ENCODE measurements at regions of chr11 and their contacts with region 1.

Region 1: DNA sequence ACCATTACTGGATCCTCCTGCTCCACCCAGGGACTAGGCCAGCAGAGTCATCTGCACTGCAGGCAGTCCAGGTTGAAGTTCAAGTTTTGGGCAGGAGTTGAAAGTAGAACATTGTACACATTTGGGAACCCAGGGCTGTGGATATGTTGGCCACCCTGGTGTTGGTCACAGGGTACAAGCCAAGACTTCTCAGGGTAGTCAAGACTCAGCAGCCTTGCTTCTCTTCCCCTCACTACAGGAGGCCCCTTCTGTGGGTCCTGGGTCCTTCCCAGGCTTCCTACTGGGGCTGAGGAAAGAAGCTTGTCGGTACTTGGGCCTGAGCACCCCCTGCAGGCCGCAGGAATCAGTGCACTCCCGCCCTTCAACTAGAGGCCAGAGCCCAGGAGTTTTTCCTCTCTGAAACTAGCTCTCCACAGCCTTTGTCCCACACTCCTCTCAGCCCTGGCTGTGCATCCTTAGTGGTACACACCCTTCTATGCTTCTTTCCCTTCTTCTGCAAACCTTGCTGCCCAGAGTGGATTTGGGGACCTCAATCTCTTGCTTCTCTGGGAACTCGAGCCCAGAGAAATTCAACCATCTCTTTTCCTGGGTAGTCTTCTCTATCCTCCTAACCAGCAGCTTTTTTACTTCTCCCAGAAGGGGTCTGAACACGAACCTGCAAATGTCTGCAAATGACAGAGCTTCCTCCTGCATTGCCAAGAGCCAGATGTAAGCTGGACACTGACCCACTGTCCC is 2.6 kb upstream of the HPX start:
- DNase-seq: peak; percentile 53 to 58 (median 57)
- H3K4me3 ChIP-seq: no peak overlapping the region
- H3K4me3 Mint-ChIP-seq: no peak overlapping the region
- H3K27ac ChIP-seq: no peak overlapping the region
- H3K27ac Mint-ChIP-seq: no peak overlapping the region
- H3K4me1 ChIP-seq: peaks cover 18% of the 10 kb centered on the region
- H3K4me1 Mint-ChIP-seq: no peaks in the 10 kb centered on the region
- H3K27me3 ChIP-seq: no peaks in the 10 kb centered on the region
- H3K27me3 Mint-ChIP-seq: no peaks in the 10 kb centered on the region

Region 2: DNA sequence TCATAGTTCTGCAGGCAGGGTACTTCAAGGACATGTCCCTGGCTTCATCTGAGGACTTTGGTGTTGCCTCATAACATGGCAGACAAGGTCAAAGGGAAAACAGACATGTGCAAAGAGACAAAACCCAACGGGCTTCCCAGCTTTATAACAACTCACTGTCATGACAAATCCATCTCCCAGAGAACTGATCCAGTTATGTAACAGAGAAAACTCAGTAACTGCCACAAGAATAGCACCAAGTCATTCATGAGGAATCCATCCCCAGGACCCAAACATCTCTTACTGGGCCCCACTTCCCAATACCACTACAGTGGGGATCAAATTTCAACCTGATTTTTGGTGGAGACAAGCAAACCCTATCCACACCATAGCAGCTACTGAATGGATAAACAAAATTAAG is 676.4 kb before region 1 on chr11:
- CTCF ChIA-PET with region 1: no interaction called
- POLR2A ChIA-PET with region 1: no interaction called
- intact Hi-C with region 1: no loop called
- DNase-seq: no peak
- H3K4me3 ChIP-seq: no peak overlapping the region
- H3K4me3 Mint-ChIP-seq: no peak overlapping the region
- H3K27ac ChIP-seq: no peak overlapping the region
- H3K27ac Mint-ChIP-seq: peak overlapping the region in 1 of 7 donors; percentile 9
- H3K4me1 ChIP-seq: no peaks in the 10 kb centered on the region
- H3K4me1 Mint-ChIP-seq: no peaks in the 10 kb centered on the region
- H3K27me3 ChIP-seq: no peaks in the 10 kb centered on the region
- H3K27me3 Mint-ChIP-seq: peaks cover 1 to 3% of the 10 kb centered on the region in 2 donors

Region 3: GRCh38 chr11:6229911-6230310 is 213.5 kb before region 1 on chr11:
- CTCF ChIA-PET with region 1: no interaction called
- POLR2A ChIA-PET with region 1: no interaction called
- intact Hi-C with region 1: no loop called
- DNase-seq: peak in 2 of 5 donors; percentile 5 to 19
- H3K4me3 ChIP-seq: no peak overlapping the region
- H3K4me3 Mint-ChIP-seq: peak overlapping the region in 3 of 8 donors; percentile 12 to 51 (median 23)
- H3K27ac ChIP-seq: no peak overlapping the region
- H3K27ac Mint-ChIP-seq: peak overlapping the region in 6 of 7 donors; percentile 13 to 84 (median 34)
- H3K4me1 ChIP-seq: peaks cover 32% of the 10 kb centered on the region
- H3K4me1 Mint-ChIP-seq: peaks cover 46 to 83% (median 67%) of the 10 kb centered on the region in 4 donors
- H3K27me3 ChIP-seq: no peaks in the 10 kb centered on the region
- H3K27me3 Mint-ChIP-seq: no peaks in the 10 kb centered on the region

Region 4: GRCh38 chr11:6333112-6333511 is 110.3 kb before region 1 on chr11:
- CTCF ChIA-PET with region 1: no interaction called
- POLR2A ChIA-PET with region 1: no interaction called
- intact Hi-C with region 1: no loop called
- DNase-seq: no peak
- H3K4me3 ChIP-seq: no peak overlapping the region
- H3K4me3 Mint-ChIP-seq: no peak overlapping the region
- H3K27ac ChIP-seq: no peak overlapping the region
- H3K27ac Mint-ChIP-seq: no peak overlapping the region
- H3K4me1 ChIP-seq: no peaks in the 10 kb centered on the region
- H3K4me1 Mint-ChIP-seq: no peaks in the 10 kb centered on the region
- H3K27me3 ChIP-seq: no peaks in the 10 kb centered on the region
- H3K27me3 Mint-ChIP-seq: peaks cover 7 to 8% of the 10 kb centered on the region in 2 donors

Region 5: GRCh38 chr11:6362873-6363678 is 80.4 kb before region 1 on chr11:
- CTCF ChIA-PET with region 1: interaction called, 33 read pairs
- POLR2A ChIA-PET with region 1: interaction called, 3 read pairs
- intact Hi-C with region 1: no loop called
- DNase-seq: peak; percentile 42 to 59 (median 52)
- H3K4me3 ChIP-seq: no peak overlapping the region
- H3K4me3 Mint-ChIP-seq: no peak overlapping the region
- H3K27ac ChIP-seq: no peak overlapping the region
- H3K27ac Mint-ChIP-seq: no peak overlapping the region
- H3K4me1 ChIP-seq: no peaks in the 10 kb centered on the region
- H3K4me1 Mint-ChIP-seq: no peaks in the 10 kb centered on the region
- H3K27me3 ChIP-seq: no peaks in the 10 kb centered on the region
- H3K27me3 Mint-ChIP-seq: no peaks in the 10 kb centered on the region

Region 6: DNA sequence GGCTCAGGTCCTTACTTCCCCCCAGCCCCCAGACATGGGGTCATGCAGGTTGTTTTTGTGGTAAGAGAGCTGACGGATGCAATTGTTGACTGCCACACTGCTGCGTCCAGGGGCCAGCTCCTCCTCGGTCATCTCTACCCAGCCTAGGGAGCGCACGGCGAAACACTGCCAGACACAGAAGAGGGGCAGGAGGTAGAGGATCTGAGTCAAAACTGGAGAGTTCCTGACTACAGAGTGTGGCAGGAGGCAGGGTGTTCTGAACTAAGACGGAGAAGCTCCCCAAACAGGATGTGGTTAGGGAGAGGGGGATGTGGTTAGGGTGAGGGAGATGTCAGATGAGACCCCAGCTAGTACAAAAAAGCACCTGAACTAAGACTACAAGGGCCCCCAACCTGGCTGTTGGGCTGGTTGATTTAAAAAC is 40.9 kb before region 1 on chr11:
- CTCF ChIA-PET with region 1: interaction called, 42 read pairs
- POLR2A ChIA-PET with region 1: interaction called, 8 read pairs
- intact Hi-C with region 1: loop called (anchors 1 kb)
- DNase-seq: peak; percentile 89 to 95 (median 90)
- H3K4me3 ChIP-seq: peak overlapping the region; percentile 40 to 53
- H3K4me3 Mint-ChIP-seq: peak overlapping the region; percentile 80 to 98 (median 84)
- H3K27ac ChIP-seq: peak overlapping the region; percentile 69
- H3K27ac Mint-ChIP-seq: peak overlapping the region; percentile 96 to 99 (median 97)
- H3K4me1 ChIP-seq: peaks cover 72% of the 10 kb centered on the region
- H3K4me1 Mint-ChIP-seq: peaks cover 62 to 98% (median 80%) of the 10 kb centered on the region in 4 donors
- H3K27me3 ChIP-seq: no peaks in the 10 kb centered on the region
- H3K27me3 Mint-ChIP-seq: no peaks in the 10 kb centered on the region

Region 7: DNA sequence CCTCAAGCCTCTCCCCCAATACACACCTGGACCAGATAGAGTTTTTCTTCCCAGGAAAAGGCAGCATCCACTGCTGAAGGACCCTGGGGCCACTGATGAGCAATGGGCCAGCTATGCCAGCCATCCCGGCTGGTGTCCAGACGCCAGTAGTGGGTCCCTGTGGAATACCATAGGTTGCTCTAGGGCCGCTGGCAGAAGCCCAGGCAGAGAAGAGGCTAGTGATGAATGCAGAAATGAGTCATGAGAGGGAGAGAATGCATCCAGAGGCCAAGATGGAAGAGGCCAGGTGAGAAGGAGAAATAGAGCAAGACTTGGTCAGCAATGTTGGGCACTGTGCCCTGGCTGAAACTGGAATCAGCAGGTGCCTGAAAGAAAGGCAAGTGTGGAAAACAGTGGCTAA is 11.6 kb before region 1 on chr11:
- CTCF ChIA-PET with region 1: interaction called, 31 read pairs
- POLR2A ChIA-PET with region 1: no interaction called
- intact Hi-C with region 1: no loop called
- DNase-seq: no peak
- H3K4me3 ChIP-seq: no peak overlapping the region
- H3K4me3 Mint-ChIP-seq: no peak overlapping the region
- H3K27ac ChIP-seq: no peak overlapping the region
- H3K27ac Mint-ChIP-seq: no peak overlapping the region
- H3K4me1 ChIP-seq: peaks cover under 1% of the 10 kb centered on the region
- H3K4me1 Mint-ChIP-seq: no peaks in the 10 kb centered on the region
- H3K27me3 ChIP-seq: no peaks in the 10 kb centered on the region
- H3K27me3 Mint-ChIP-seq: no peaks in the 10 kb centered on the region

Region 8: GRCh38 chr11:6481012-6481923 is 37.8 kb after region 1 on chr11 and contains the starts of genes ARFIP2 and TIMM10B:
- CTCF ChIA-PET with region 1: interaction called, 9 read pairs
- POLR2A ChIA-PET with region 1: interaction called, 4 read pairs
- intact Hi-C with region 1: loop called (anchors 5 kb)
- DNase-seq: peak; percentile 93 to 98 (median 95)
- H3K4me3 ChIP-seq: peak within 1 kb of the TSS; percentile 83 to 97
- H3K4me3 Mint-ChIP-seq: peak within 1 kb of the TSS; percentile 93 to 98 (median 96)
- H3K27ac ChIP-seq: peak within 1 kb of the TSS; percentile 90
- H3K27ac Mint-ChIP-seq: peak within 1 kb of the TSS; percentile 95 to 99 (median 98)
- H3K4me1 ChIP-seq: peaks cover 46% of the 10 kb centered on the region
- H3K4me1 Mint-ChIP-seq: peaks cover 26 to 44% (median 36%) of the 10 kb centered on the region in 4 donors
- H3K27me3 ChIP-seq: no peaks in the 10 kb centered on the region
- H3K27me3 Mint-ChIP-seq: no peaks in the 10 kb centered on the region
- total RNA-seq, gene ARFIP2: 53.9 to 56.9 TPM
- total RNA-seq, gene TIMM10B: 54.7 to 60.3 TPM